CD4-positive, alpha-beta T cell (primary cell): ENCODE measurements at regions of chr7 and their contacts with region 1.

Region 1: GRCh38 chr7:105691733-105692564 is 110.7 kb upstream of the EFCAB10 start:
- DNase-seq: peak; percentile 50 to 94 (median 68)
- ATAC-seq: peak; percentile 82
- H3K4me3 ChIP-seq: peak overlapping the region; percentile 92
- H3K4me3 Mint-ChIP-seq: peak overlapping the region; percentile 87
- H3K27ac ChIP-seq: peak overlapping the region; percentile 94 to 97
- H3K27ac Mint-ChIP-seq: peak overlapping the region; percentile 98
- H3K4me1 ChIP-seq: peaks cover 53% of the 10 kb centered on the region
- H3K4me1 Mint-ChIP-seq: peaks cover 62% of the 10 kb centered on the region
- H3K27me3 ChIP-seq: no peaks in the 10 kb centered on the region
- H3K27me3 Mint-ChIP-seq: no peaks in the 10 kb centered on the region
- CTCF ChIP-seq: no peak

Region 2: DNA sequence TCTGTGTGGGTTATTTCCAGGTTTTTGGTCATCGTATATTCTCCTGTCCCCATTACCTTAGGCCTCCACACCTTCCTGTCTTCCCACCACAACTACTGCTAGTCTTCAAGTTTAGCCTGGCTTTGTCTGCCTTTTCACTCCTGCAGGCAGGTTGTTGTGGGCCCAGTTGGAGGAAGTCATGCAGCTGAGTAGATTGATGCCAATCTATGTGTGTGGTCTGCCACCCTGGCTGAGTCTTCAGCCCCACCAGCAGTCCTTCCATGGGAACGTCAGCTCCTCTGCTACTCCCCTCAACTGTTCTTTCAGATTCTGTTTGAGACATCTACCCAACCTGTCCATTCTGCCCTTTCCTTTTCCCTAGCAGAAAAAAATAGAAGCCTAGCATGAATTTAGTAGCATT is 153.6 kb before region 1 on chr7:
- CTCF ChIA-PET with region 1: no interaction called
- POLR2A ChIA-PET with region 1: no interaction called
- intact Hi-C with region 1: no loop called
- DNase-seq: no peak
- ATAC-seq: no peak
- H3K4me3 ChIP-seq: no peak overlapping the region
- H3K4me3 Mint-ChIP-seq: no peak overlapping the region
- H3K27ac ChIP-seq: no peak overlapping the region
- H3K27ac Mint-ChIP-seq: no peak overlapping the region
- H3K4me1 ChIP-seq: peaks cover 12% of the 10 kb centered on the region
- H3K4me1 Mint-ChIP-seq: peaks cover 17% of the 10 kb centered on the region
- H3K27me3 ChIP-seq: no peaks in the 10 kb centered on the region
- H3K27me3 Mint-ChIP-seq: no peaks in the 10 kb centered on the region
- CTCF ChIP-seq: no peak

Region 3: DNA sequence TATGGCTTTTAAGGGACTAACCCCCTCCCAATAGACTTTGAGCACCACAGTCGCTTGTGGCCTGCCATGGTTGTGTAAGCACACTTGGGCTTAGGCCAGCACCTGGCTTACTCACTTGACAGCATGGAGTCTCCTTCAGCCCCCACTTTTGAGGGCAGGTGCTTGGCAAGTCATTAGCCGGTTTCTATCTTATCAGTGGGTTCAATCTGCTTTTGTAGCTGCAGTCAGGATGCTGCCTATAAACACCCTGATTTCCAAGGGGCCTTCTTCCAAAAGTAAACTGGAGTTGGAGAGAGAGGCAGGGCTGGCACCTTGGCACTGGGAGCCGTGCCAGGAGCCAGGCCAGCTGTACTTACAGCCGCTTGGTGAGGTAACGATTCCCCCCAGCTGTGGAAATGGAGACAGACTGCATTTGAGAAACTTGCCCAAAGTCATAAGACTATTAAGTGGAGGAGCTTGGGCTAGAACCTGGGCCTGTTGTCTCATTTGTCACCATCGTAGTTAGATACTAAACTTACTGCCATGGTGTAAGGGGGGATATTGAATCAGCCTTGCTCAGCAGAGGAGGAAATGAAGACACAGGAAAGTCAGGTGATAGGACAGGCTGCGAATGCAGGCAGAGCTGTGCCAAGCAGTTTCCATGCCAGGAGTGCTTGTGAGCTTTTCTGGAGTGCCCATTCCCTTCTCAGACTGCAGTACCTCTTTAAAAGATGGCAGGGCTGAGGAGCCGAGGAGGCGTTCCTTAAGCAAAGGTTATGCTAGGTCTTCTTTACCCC is 18.4 kb before region 1 on chr7:
- CTCF ChIA-PET with region 1: interaction called, 7 read pairs
- POLR2A ChIA-PET with region 1: interaction called, 69 read pairs
- intact Hi-C with region 1: loop called in 1 of 2 experiments (anchors 1 kb)
- DNase-seq: peak in 3 of 14 experiments; percentile 18 to 32 (median 19)
- ATAC-seq: no peak
- H3K4me3 ChIP-seq: no peak overlapping the region
- H3K4me3 Mint-ChIP-seq: peak overlapping the region; percentile 25
- H3K27ac ChIP-seq: no peak overlapping the region
- H3K27ac Mint-ChIP-seq: peak overlapping the region; percentile 98
- H3K4me1 ChIP-seq: peaks cover 59% of the 10 kb centered on the region
- H3K4me1 Mint-ChIP-seq: peaks cover 70% of the 10 kb centered on the region
- H3K27me3 ChIP-seq: no peaks in the 10 kb centered on the region
- H3K27me3 Mint-ChIP-seq: no peaks in the 10 kb centered on the region
- CTCF ChIP-seq: no peak

Region 4: DNA sequence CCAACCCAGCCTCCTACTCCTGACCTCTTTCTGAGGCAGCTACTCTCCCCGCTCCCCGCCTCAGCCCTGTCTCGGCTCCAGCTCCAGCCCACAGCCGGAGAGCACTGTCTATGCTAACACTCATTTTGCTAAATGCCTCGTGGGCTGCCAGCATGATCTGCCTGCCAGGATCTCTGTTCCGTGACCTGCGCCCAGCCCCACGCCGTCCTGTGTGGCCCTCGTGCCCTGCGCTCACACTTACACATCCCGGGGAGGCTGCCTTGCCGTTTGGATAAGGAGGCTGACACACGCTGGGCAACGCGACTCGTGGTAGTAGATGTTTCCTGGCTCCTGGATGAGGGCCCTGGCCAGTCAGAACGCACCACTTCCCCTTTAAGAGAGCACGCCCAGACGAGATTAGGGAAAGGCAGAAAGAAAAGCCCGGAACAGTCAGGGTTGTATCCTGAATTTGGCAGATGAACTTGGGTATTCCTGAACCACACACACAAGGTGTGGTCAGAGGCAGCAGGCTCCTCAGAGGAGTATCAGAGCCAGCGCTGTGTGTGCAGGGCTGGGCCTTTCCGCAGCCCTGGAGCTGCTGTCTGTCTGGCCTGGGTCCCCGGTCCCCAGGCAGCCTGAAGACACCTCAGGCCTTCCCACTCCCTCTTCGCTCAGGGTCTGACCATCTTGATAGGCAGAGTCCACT is 13.0 kb before region 1 on chr7:
- CTCF ChIA-PET with region 1: interaction called, 7 read pairs
- POLR2A ChIA-PET with region 1: interaction called, 69 read pairs
- intact Hi-C with region 1: loop called in 1 of 2 experiments (anchors 1 kb)
- DNase-seq: peak in 6 of 14 experiments; percentile 12 to 60 (median 50)
- ATAC-seq: peak; percentile 2
- H3K4me3 ChIP-seq: peak overlapping the region; percentile 55
- H3K4me3 Mint-ChIP-seq: peak overlapping the region; percentile 88
- H3K27ac ChIP-seq: peak overlapping the region; percentile 39 to 88
- H3K27ac Mint-ChIP-seq: peak overlapping the region; percentile 98
- H3K4me1 ChIP-seq: peaks cover 66% of the 10 kb centered on the region
- H3K4me1 Mint-ChIP-seq: peaks cover 88% of the 10 kb centered on the region
- H3K27me3 ChIP-seq: no peaks in the 10 kb centered on the region
- H3K27me3 Mint-ChIP-seq: no peaks in the 10 kb centered on the region
- CTCF ChIP-seq: no peak

Region 5: DNA sequence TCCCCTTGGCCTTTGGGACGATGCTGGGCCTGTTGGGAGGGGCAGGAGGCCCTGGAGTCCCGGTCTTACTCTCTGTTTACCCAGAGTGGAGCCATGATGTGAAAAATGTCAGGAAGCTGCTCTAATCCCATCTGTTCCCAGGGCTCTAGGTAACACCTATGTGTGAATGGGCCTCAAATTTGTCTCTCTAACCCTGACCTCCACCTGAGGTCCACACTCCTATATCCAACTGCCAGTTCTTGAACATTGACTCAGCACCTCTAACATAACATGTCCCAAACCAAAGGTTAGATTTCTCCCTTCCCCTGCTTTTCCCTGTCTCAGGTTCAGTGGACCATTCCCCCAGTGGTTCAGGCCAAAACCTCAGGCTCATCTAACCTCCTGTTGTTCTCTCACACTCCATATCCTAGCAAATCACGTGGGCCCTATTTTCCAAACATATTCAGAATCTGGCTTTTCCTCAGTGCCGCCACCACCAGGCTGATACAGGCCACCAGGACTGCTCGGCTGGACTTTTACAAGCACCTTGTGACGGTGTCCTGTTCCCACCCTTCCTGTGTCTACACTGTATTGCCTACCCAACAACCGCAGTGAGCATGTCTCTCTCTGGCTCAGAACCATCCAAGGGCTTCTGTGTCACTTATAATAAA is 53.9 kb after region 1 on chr7:
- CTCF ChIA-PET with region 1: no interaction called
- POLR2A ChIA-PET with region 1: no interaction called
- intact Hi-C with region 1: no loop called
- DNase-seq: no peak
- ATAC-seq: no peak
- H3K4me3 ChIP-seq: no peak overlapping the region
- H3K4me3 Mint-ChIP-seq: no peak overlapping the region
- H3K27ac ChIP-seq: no peak overlapping the region
- H3K27ac Mint-ChIP-seq: no peak overlapping the region
- H3K4me1 ChIP-seq: no peaks in the 10 kb centered on the region
- H3K4me1 Mint-ChIP-seq: no peaks in the 10 kb centered on the region
- H3K27me3 ChIP-seq: no peaks in the 10 kb centered on the region
- H3K27me3 Mint-ChIP-seq: no peaks in the 10 kb centered on the region
- CTCF ChIP-seq: no peak

Region 6: GRCh38 chr7:106009403-106010226 is 317.7 kb after region 1 on chr7:
- CTCF ChIA-PET with region 1: no interaction called
- POLR2A ChIA-PET with region 1: no interaction called
- intact Hi-C with region 1: loop called in 1 of 2 experiments (anchors 1 kb)
- DNase-seq: peak; percentile 70 to 91 (median 78)
- ATAC-seq: peak; percentile 97
- H3K4me3 ChIP-seq: no peak overlapping the region
- H3K4me3 Mint-ChIP-seq: peak overlapping the region; percentile 16
- H3K27ac ChIP-seq: no peak overlapping the region
- H3K27ac Mint-ChIP-seq: peak overlapping the region; percentile 38
- H3K4me1 ChIP-seq: peaks cover 21% of the 10 kb centered on the region
- H3K4me1 Mint-ChIP-seq: peaks cover 51% of the 10 kb centered on the region
- H3K27me3 ChIP-seq: no peaks in the 10 kb centered on the region
- H3K27me3 Mint-ChIP-seq: no peaks in the 10 kb centered on the region
- CTCF ChIP-seq: peak; percentile 99

Region 7: GRCh38 chr7:106377847-106378361 is 686.0 kb after region 1 on chr7:
- CTCF ChIA-PET with region 1: no interaction called
- POLR2A ChIA-PET with region 1: no interaction called
- intact Hi-C with region 1: no loop called
- DNase-seq: no peak
- ATAC-seq: no peak
- H3K4me3 ChIP-seq: no peak overlapping the region
- H3K4me3 Mint-ChIP-seq: no peak overlapping the region
- H3K27ac ChIP-seq: no peak overlapping the region
- H3K27ac Mint-ChIP-seq: no peak overlapping the region
- H3K4me1 ChIP-seq: no peaks in the 10 kb centered on the region
- H3K4me1 Mint-ChIP-seq: no peaks in the 10 kb centered on the region
- H3K27me3 ChIP-seq: peaks cover 0 to 5% of the 10 kb centered on the region in 2 experiments
- H3K27me3 Mint-ChIP-seq: no peaks in the 10 kb centered on the region
- CTCF ChIP-seq: no peak